Activated CD4-positive, alpha-beta memory T cell treated with anti-CD3 and anti-CD28 coated beads for 36 hours (primary cell): ENCODE measurements at regions of chr7 and their contacts with region 1.

Region 1: DNA sequence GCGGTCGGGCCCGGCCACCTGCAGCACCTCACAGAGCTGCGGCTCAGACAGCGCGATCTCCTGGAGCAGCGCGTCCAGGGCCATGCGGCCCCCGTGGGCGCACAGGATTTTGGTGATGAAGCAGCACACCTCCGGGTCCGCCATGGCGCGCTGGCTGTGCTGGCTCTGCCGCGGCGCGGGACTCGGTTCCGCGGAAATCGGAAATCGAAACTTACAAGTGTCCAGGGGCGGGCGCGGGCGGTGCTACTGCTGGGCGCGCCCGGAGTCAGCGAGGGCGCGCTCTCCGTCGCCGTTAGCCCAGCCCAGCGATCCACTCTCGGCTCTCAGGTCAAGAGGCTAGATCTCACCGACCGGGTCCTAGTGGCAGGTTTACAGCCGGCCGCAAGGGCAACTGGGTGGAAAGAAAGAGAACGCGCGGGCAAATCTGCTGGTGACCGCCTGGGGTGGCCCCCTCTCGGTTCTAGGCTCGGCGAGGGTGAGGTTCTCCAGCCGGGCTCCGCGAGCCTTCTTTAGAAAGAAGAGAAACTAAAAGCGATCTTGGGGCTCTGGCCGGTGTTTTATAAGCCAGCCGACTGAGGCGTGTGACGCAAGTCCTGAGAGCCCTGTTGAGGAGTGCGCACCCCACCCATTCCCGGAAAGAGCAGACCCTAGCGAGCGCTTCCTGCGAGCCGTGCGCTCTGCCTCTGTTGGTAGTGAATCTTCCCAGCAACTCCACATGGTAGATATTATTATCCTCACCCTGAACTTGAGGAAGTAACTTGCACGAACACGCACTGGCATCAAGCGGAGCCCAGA is at the start of gene ZC3HAV1:
- DNase-seq: peak; percentile 92
- H3K4me3 Mint-ChIP-seq: peak within 1 kb of the TSS; percentile 98
- H3K27ac Mint-ChIP-seq: peak within 1 kb of the TSS; percentile 98
- H3K4me1 Mint-ChIP-seq: peaks cover 28% of the 10 kb centered on the region
- H3K27me3 Mint-ChIP-seq: no peaks in the 10 kb centered on the region
- total RNA-seq, gene ZC3HAV1: 99.3 to 99.6 TPM

Region 2: GRCh38 chr7:139095194-139095659 is 14.2 kb before region 1 on chr7:
- CTCF ChIA-PET with region 1: interaction called, 12 read pairs
- POLR2A ChIA-PET with region 1: interaction called, 55 read pairs
- intact Hi-C with region 1: loop called (anchors 1 kb)
- DNase-seq: peak; percentile 85
- H3K4me3 Mint-ChIP-seq: peak overlapping the region; percentile 71
- H3K27ac Mint-ChIP-seq: peak overlapping the region; percentile 87
- H3K4me1 Mint-ChIP-seq: peaks cover 86% of the 10 kb centered on the region
- H3K27me3 Mint-ChIP-seq: no peaks in the 10 kb centered on the region

Region 3: GRCh38 chr7:139124084-139124914 is 14.9 kb after region 1 on chr7:
- CTCF ChIA-PET with region 1: no interaction called
- POLR2A ChIA-PET with region 1: interaction called, 6 read pairs
- intact Hi-C with region 1: loop called (anchors 2 kb)
- DNase-seq: peak; percentile 59
- H3K4me3 Mint-ChIP-seq: no peak overlapping the region
- H3K27ac Mint-ChIP-seq: peak overlapping the region; percentile 31
- H3K4me1 Mint-ChIP-seq: peaks cover 36% of the 10 kb centered on the region
- H3K27me3 Mint-ChIP-seq: no peaks in the 10 kb centered on the region

Region 4: GRCh38 chr7:139133335-139134139 is 24.2 kb after region 1 on chr7:
- CTCF ChIA-PET with region 1: interaction called, 3 read pairs
- POLR2A ChIA-PET with region 1: no interaction called
- intact Hi-C with region 1: loop called (anchors 1 kb)
- DNase-seq: peak; percentile 93
- H3K4me3 Mint-ChIP-seq: peak overlapping the region; percentile 76
- H3K27ac Mint-ChIP-seq: peak overlapping the region; percentile 59
- H3K4me1 Mint-ChIP-seq: peaks cover 18% of the 10 kb centered on the region
- H3K27me3 Mint-ChIP-seq: no peaks in the 10 kb centered on the region

Region 5: GRCh38 chr7:139330333-139331030 is 221.1 kb after region 1 on chr7:
- CTCF ChIA-PET with region 1: no interaction called
- POLR2A ChIA-PET with region 1: no interaction called
- intact Hi-C with region 1: loop called (anchors 1 kb)
- DNase-seq: no peak
- H3K4me3 Mint-ChIP-seq: no peak overlapping the region
- H3K27ac Mint-ChIP-seq: no peak overlapping the region
- H3K4me1 Mint-ChIP-seq: peaks cover 16% of the 10 kb centered on the region
- H3K27me3 Mint-ChIP-seq: no peaks in the 10 kb centered on the region

Region 6: DNA sequence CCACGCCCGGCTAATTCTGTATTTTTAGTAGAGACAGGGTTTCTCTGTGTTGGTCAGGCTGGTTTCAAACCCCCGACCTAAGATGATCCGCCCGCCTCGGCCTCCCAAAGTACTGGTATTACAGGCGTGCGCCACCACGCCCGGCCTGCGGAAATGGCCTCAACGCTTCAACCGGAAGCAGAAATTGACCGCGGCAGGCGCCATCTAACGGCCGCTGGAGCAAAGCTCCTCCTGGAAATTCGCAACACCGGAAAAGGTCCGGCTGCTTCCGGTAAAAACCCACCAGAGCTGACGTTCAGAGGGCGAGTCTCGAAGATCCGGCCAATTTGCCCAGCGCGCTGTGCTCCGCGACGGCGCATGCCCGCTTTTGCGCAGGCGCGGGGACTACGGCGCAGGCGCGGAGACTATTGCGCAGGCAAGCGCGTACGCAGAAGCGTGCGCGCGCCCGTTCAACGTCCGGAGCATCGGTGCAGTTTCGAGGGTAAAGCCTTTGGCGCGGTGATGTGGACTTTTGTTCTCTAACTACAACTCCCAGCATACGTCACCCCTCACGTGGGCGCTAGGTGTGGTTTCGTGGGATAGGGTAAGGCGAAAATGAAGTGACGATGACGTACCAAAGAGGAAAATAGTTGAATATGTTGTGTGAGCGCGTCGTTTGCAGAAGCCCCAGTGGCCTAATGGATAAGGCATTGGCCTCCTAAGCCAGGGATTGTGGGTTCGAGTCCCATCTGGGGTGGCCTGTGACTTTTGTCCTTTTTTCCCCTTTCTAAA is 230.8 kb after region 1 on chr7:
- CTCF ChIA-PET with region 1: no interaction called
- POLR2A ChIA-PET with region 1: no interaction called
- intact Hi-C with region 1: loop called (anchors 1 kb)
- DNase-seq: peak; percentile 99
- H3K4me3 Mint-ChIP-seq: peak overlapping the region; percentile 86
- H3K27ac Mint-ChIP-seq: peak overlapping the region; percentile 99
- H3K4me1 Mint-ChIP-seq: peaks cover 27% of the 10 kb centered on the region
- H3K27me3 Mint-ChIP-seq: peaks cover 4% of the 10 kb centered on the region